Testis (tissue), 5 donors: ENCODE measurements at regions of chr11 and their contacts with region 1.

Region 1: GRCh38 chr11:62542750-62543567 is 3.6 kb downstream of the AHNAK start:
- DNase-seq: peak; percentile 81
- H3K4me3 ChIP-seq: peak overlapping the region in 1 of 2 donors; percentile 86
- H3K27ac ChIP-seq: peak overlapping the region; percentile 74 to 95
- H3K4me1 ChIP-seq: peaks cover 58% of the 10 kb centered on the region
- H3K27me3 ChIP-seq: no peaks in the 10 kb centered on the region
- CTCF ChIP-seq: peak; percentile 97 to 99 (median 98)
- POLR2A ChIP-seq: no peak

Region 2: DNA sequence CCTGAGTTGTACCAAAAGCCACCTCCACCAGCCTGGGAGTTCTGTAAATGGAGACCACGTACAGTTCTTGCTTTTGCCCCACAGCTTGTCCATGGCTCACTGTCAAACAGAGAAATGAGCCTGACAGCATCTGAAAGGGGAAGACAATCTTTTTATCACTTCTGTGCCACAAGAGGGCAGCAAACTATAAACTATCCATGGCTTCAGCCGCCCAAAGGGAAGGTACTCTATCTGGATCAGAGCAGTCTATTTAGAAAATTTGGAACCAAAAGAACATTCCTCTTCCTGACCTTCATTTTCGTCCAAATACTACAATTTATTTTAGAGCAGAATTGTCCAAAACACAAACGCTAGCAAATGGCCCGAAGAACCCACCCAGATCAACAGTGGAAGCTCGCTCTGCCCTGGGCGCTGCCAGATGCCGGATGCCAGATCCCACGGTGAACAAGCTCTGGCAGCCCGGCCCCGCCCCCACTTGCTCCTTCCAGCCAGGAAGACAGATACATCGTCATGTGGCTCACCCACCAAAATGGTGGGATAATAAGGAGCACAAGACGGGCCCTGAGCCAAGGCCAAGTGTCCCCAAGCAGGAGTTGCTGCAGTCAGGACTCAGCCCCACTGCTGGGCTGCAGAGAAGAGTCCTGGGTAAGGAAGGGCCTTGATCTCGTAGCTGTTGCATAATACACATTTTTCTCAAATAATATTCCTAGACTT is 148.0 kb before region 1 on chr11:
- intact Hi-C with region 1: loop called (anchors 10 kb)
- DNase-seq: peak; percentile 85
- H3K4me3 ChIP-seq: no peak overlapping the region
- H3K27ac ChIP-seq: peak overlapping the region; percentile 21 to 67
- H3K4me1 ChIP-seq: peaks cover 44% of the 10 kb centered on the region
- H3K27me3 ChIP-seq: no peaks in the 10 kb centered on the region
- CTCF ChIP-seq: peak; percentile 74 to 80 (median 80)
- POLR2A ChIP-seq: no peak

Region 3: DNA sequence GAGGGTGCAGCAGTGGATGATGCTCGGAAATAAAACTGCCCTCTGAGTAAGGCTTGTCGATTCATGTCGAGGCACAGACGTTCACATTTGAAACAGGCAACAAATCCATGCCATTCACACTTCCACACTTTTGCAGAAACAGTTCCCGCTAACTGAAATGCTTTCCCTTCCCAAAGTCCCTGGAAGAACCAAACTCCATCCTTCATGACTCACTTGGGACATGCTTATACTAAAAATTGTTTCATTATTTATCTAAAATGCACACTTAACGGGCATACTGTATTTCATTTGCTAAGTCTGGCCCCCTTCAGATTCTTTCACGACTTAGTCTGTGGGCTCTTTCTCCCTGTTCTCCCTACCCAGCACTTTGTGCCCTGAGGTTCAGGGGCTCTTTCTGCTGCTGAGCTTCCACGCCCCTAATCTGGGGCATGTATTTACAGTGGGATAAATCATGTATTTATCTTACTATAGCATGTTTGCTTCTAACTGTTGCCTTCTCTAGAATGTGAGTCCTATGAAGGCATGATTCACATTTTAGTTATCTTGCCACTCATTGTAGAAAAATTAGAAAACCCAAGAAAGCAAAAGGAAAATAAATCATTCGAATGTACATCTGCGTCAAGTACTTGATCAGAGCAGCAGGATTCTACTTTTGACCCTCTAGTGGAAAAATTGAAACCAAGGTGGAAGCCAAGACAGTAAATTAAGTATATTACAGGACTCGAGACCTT is 111.6 kb before region 1 on chr11:
- intact Hi-C with region 1: loop called (anchors 5 kb)
- DNase-seq: no peak
- H3K4me3 ChIP-seq: no peak overlapping the region
- H3K27ac ChIP-seq: no peak overlapping the region
- H3K4me1 ChIP-seq: peaks cover 32% of the 10 kb centered on the region
- H3K27me3 ChIP-seq: no peaks in the 10 kb centered on the region
- CTCF ChIP-seq: no peak
- POLR2A ChIP-seq: no peak

Region 4: DNA sequence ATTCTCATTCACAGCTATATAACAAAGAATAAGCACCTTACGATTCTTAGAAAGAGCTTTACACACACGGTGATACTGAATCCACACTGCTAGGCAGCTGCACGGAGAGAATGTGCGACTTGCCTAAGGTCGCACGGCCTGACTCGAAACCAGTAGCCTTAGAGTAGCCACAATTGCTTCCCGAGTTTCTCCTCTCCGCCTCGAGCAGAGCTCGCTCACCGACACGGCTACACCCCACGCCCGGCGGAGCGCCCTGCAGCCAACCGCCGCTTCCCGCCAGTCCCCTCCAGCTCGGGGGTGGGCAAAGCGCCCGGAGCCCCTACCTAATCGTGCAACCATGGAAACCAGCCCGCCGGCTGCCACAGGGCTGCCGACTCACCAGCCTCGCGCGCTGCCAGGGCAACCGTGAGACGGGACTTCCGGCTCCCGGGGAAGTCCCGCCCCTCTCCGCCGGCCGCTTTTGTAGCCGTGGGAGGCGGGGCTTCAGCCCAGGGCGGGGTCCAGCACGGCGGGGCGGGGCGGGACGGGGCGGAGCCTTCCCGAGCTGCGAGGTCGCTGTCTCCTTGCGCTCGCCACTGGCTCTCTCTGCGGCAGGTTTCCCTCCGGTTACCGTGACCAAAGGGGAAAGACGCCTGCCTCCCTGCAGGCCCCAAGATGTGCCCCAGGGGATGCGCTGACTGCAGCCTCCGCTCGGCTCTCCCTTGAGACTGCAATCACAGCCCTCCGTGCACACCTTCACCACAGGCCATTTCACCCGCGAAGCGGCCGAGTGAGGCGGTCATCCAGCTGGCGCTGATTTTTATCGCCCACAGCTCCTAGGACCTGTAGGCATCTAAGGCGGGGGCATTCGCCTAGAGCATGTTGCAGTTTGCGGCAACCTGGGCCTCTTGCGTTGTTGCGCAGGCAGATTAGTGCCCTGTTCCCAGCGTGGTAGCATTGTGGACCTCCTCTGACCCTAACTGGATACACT is 163.2 kb after region 1 on chr11:
- intact Hi-C with region 1: no loop called
- DNase-seq: peak; percentile 97
- H3K4me3 ChIP-seq: peak overlapping the region; percentile 75
- H3K27ac ChIP-seq: peak overlapping the region; percentile 15 to 80
- H3K4me1 ChIP-seq: peaks cover 44% of the 10 kb centered on the region
- H3K27me3 ChIP-seq: no peaks in the 10 kb centered on the region
- CTCF ChIP-seq: no peak
- POLR2A ChIP-seq: no peak